Gastrocnemius medialis (tissue), 4 donors: ENCODE measurements at regions of chr14 and their contacts with region 1.

Region 1: DNA sequence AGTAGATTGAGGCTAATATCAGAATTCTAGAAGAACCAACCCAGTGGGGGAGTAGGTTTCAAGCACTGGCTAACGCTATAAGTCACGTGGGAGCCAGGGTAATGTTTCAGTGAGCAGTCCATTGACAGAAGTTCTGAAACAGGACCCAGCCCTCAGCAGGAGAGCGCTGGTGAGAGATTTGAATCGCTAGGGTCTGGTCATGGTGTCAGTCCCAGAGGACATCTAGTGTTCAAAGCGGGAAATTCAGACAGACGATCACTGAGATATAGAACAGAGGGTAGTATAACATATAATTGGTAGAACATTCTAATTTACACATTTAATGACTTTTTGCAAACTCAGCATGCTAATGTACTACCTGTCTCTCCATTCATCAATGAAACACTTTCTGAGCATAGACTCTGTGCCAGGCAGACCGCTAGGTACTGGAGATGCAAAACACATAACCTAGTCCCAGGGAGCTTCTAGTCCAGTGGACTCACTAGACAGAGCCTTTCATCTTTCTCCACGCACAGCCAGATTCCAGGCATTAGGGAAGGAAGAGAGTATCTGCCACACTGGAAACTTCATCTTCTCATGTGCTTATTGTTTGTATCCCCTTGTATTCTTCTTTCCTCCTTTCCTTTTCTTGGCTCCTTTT is 35.4 kb upstream of the RNASE3 start:
- DNase-seq: peak in 1 of 2 donors; percentile 36
- ATAC-seq: peak; percentile 80 to 88
- H3K4me3 ChIP-seq: no peak overlapping the region
- H3K27ac ChIP-seq: no peak overlapping the region
- H3K4me1 ChIP-seq: peaks cover 0 to 4% of the 10 kb centered on the region in 2 donors
- H3K27me3 ChIP-seq: no peaks in the 10 kb centered on the region
- CTCF ChIP-seq: peak; percentile 28 to 67 (median 55)
- POLR2A ChIP-seq: no peak

Region 2: GRCh38 chr14:20970983-20971704 is 115.4 kb after region 1 on chr14:
- in situ Hi-C with region 1: loop called (anchors 5 to 25 kb)
- intact Hi-C with region 1: loop called (anchors 1 kb)
- DNase-seq: peak; percentile 62 to 74
- ATAC-seq: peak; percentile 92 to 93
- H3K4me3 ChIP-seq: peak overlapping the region; percentile 68 to 80 (median 71)
- H3K27ac ChIP-seq: peak overlapping the region; percentile 40 to 67 (median 59)
- H3K4me1 ChIP-seq: peaks cover 5 to 7% of the 10 kb centered on the region in 2 donors
- H3K27me3 ChIP-seq: no peaks in the 10 kb centered on the region
- CTCF ChIP-seq: peak; percentile 77 to 88 (median 84)
- POLR2A ChIP-seq: no peak